PC-3 (cell line): ENCODE measurements at regions of chr10 and their contacts with region 1.

Region 1: GRCh38 chr10:34696423-34696822 is 118.7 kb downstream of the PARD3 start:
- DNase-seq: peak; percentile 99
- ATAC-seq: peak; percentile 74
- H3K4me3 ChIP-seq: no peak overlapping the region
- H3K27ac ChIP-seq: peak overlapping the region; percentile 0; the same call in 1 of the 2 replicates
- H3K4me1 ChIP-seq: peaks cover 57% of the 10 kb centered on the region
- H3K27me3 ChIP-seq: no peaks in the 10 kb centered on the region
- CTCF ChIP-seq: no peak

Region 2: DNA sequence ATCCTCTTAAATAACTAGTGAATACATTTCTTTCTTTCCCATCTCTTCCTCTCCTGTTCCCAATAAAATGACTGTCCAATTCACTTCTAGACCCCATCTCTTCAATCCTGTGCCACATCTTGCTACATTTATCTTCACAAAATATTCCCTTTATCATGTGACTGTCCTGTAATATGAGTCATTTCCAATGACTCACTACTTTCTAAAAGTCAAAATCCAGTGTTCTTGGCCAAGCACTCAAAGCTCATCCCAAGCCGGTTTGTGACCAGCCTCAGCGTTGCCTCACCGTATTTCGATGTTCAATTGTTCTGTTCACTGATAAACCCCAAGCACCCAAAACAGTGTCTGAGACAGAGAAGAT is 13.9 kb after region 1 on chr10:
- CTCF ChIA-PET with region 1: no interaction called
- POLR2A ChIA-PET with region 1: no interaction called
- intact Hi-C with region 1: loop called (anchors 1 kb)
- DNase-seq: peak; percentile 100
- ATAC-seq: peak; percentile 83
- H3K4me3 ChIP-seq: peak overlapping the region; percentile 15; the same call in 1 of the 2 replicates
- H3K27ac ChIP-seq: peak overlapping the region; percentile 25
- H3K4me1 ChIP-seq: peaks cover 62% of the 10 kb centered on the region
- H3K27me3 ChIP-seq: no peaks in the 10 kb centered on the region
- CTCF ChIP-seq: no peak

Region 3: GRCh38 chr10:35011771-35012191 is 315.4 kb after region 1 on chr10:
- CTCF ChIA-PET with region 1: no interaction called
- POLR2A ChIA-PET with region 1: no interaction called
- intact Hi-C with region 1: no loop called
- DNase-seq: peak; percentile 97
- ATAC-seq: peak; percentile 34
- H3K4me3 ChIP-seq: no peak overlapping the region
- H3K27ac ChIP-seq: peak overlapping the region; percentile 71
- H3K4me1 ChIP-seq: peaks cover 59% of the 10 kb centered on the region
- H3K27me3 ChIP-seq: no peaks in the 10 kb centered on the region
- CTCF ChIP-seq: no peak